HEK293 (cell line): ENCODE measurements at regions of chr6 and their contacts with region 1.

Region 1: GRCh38 chr6:148177589-148178233 is 164.9 kb upstream of the SASH1 start:
- H3K4me3 ChIP-seq: no peak overlapping the region
- H3K27ac ChIP-seq: no peak overlapping the region
- H3K4me1 ChIP-seq: no peaks in the 10 kb centered on the region
- CTCF ChIP-seq: peak; percentile 31; the same call in 1 of the 2 replicates

Region 2: GRCh38 chr6:147986846-147987245 is 190.9 kb before region 1 on chr6:
- CTCF ChIA-PET with region 1: no interaction called
- POLR2A ChIA-PET with region 1: no interaction called
- H3K4me3 ChIP-seq: no peak overlapping the region
- H3K27ac ChIP-seq: no peak overlapping the region
- H3K4me1 ChIP-seq: no peaks in the 10 kb centered on the region
- CTCF ChIP-seq: no peak

Region 3: DNA sequence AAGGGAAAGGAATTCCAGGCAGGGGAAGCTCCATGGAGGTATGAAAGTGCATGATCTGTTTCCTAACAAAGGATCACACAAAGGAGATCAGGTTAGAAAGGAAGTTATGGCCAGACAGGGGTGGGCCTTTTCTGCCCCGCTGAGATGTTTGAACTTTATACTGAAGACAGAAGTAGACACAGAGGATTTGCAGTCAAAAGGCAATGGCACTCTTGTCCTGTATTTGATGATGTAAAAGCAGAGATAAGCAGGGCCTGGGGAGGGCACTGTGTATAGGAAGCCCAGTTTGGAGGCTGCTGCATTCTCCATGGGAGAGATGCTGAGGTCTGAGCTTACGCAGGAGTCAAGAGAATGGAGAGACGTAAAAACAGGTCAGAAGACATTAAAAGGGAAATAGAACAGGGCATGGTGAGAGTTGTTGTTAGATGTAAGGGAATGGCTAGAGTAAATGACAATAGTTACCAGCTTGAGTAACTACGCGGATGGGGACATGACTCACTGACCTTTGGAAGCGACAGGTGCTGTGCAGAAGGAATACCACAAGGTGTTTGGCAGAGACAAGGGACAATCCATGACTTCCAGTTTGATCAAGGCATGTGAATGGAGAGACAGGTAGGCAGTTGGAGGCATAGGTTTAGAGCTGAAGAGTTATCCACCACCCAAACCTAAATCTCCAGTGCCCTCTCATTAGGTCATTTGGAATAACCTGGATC is 25.6 kb before region 1 on chr6:
- CTCF ChIA-PET with region 1: interaction called, 18 read pairs
- POLR2A ChIA-PET with region 1: no interaction called
- H3K4me3 ChIP-seq: no peak overlapping the region
- H3K27ac ChIP-seq: no peak overlapping the region
- H3K4me1 ChIP-seq: no peaks in the 10 kb centered on the region
- CTCF ChIP-seq: no peak

Region 4: GRCh38 chr6:148192310-148192709 is 14.6 kb after region 1 on chr6:
- CTCF ChIA-PET with region 1: interaction called, 19 read pairs
- POLR2A ChIA-PET with region 1: no interaction called
- H3K4me3 ChIP-seq: no peak overlapping the region
- H3K27ac ChIP-seq: no peak overlapping the region
- H3K4me1 ChIP-seq: no peaks in the 10 kb centered on the region
- CTCF ChIP-seq: no peak

Region 5: GRCh38 chr6:148422085-148422484 is 244.4 kb after region 1 on chr6:
- CTCF ChIA-PET with region 1: no interaction called
- POLR2A ChIA-PET with region 1: no interaction called
- H3K4me3 ChIP-seq: no peak overlapping the region
- H3K27ac ChIP-seq: no peak overlapping the region
- H3K4me1 ChIP-seq: no peaks in the 10 kb centered on the region
- CTCF ChIP-seq: no peak

Region 6: GRCh38 chr6:148464319-148465010 is 286.8 kb after region 1 on chr6:
- CTCF ChIA-PET with region 1: interaction called, 59 read pairs
- POLR2A ChIA-PET with region 1: no interaction called
- H3K4me3 ChIP-seq: no peak overlapping the region
- H3K27ac ChIP-seq: no peak overlapping the region
- H3K4me1 ChIP-seq: no peaks in the 10 kb centered on the region; the same call in 1 of the 2 replicates
- CTCF ChIP-seq: peak; percentile 73

Region 7: DNA sequence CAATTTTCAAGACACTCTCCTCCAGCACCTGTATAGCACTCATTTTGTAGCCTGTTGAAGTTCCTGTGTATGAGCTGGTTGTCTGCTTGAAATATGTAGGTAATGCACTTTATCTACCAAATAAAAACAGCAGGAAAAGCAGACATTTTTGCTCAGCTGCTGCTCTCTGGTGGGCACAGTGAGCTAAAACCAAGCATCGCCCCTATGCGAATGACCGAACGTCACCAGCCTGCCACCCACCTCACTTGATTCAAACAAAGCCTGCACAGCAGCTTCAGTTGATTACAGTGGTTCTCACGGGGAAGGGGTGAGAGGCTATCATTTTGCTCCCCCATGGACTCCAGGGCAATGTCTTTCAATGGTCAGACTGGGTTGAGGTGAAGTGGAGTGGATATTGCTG is 350.6 kb after region 1 on chr6:
- CTCF ChIA-PET with region 1: interaction called, 15 read pairs
- POLR2A ChIA-PET with region 1: no interaction called
- H3K4me3 ChIP-seq: no peak overlapping the region
- H3K27ac ChIP-seq: no peak overlapping the region
- H3K4me1 ChIP-seq: no peaks in the 10 kb centered on the region
- CTCF ChIP-seq: peak; percentile 27; the same call in 1 of the 2 replicates